Caco-2 (cell line): ENCODE measurements at regions of chr20 and their contacts with region 1.

Region 1: DNA sequence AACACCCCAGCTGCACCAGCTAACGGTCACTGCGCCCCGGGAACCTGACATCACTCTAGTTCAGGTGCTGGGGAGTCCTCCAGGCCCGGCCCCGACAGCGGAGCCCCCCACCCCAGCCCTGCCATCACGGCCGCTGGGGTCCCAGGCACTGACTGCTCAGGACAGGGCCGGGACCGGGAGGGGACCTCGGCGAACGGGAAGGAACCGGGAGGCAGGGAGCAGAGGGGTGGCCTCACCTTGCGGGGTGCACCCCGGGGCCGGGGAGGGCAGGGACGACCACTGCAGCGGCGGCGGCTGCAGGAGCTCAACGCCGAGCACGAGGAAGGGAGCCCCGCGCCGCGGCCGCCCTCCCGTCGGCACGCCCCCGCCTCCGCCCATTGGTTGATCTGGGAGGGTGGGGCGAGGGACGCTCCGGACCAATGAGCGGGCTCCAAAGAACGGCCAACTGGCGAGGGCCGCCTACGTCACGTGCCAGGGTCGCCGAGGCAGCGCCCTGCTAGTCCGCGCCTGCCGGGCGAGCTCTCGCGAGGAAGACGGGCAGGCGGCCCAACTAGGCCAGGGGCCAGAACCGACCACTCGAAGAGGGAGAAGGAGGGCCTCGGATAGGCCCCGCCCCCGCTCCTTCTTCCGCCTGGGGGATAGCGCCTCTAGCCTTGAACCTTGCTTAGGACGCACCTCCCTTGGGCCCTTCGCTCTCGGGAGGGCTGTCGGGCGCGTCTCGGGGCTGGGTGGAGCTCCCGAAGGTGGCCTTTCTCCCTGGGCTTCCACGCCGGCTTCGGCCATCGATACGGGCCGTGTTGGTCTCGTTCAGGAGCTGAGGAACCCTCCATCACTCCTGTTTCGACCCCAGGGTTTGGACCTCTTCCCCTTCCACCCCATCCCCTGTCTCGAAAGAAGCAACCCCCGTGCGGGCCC is at the start of gene ADISSP:
- DNase-seq: peak; percentile 99
- H3K4me3 ChIP-seq: peak within 1 kb of the TSS; percentile 91
- H3K4me3 Mint-ChIP-seq: peak within 1 kb of the TSS; percentile 90
- H3K27ac Mint-ChIP-seq: peak within 1 kb of the TSS; percentile 90
- H3K4me1 ChIP-seq: peaks cover 11% of the 10 kb centered on the region
- H3K4me1 Mint-ChIP-seq: peaks cover 7% of the 10 kb centered on the region
- H3K27me3 ChIP-seq: no peaks in the 10 kb centered on the region
- H3K27me3 Mint-ChIP-seq: no peaks in the 10 kb centered on the region
- CTCF ChIP-seq: peak in 1 of 2 experiments; percentile 29
- total RNA-seq, gene ADISSP: 54.7 and 56.1 TPM in 2 replicates

Region 2: DNA sequence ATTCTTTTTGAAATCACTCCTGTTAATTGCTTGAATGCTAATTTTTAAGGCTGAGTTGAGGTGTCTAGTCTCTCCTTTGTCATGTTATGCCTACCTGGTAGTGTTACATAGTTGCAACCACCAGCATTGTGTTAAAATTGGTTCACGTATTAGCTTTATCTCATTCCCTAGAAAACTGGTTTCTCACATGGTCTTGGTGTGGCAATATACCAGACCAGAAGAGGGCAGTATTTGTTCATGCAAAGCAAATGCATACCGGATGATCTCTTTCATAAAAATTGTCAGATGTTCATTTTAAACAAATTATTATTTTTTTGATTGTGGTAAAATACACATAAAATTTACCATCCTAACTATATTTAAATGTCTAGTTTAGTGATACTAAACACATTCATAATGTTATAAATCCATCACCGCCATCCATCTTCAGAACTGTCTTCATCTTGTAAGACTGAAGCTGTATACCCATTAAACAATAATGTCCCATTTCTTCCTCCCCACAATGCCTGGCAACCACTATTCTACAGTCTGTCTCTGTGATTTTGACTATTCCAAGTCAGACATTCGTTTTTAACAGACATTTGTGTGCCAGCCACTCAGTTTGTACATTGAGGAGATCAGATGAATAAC is 204.0 kb before region 1 on chr20:
- CTCF ChIA-PET with region 1: interaction called, 10 read pairs
- POLR2A ChIA-PET with region 1: no interaction called
- intact Hi-C with region 1: no loop called
- DNase-seq: peak in 1 of 2 experiments; percentile 65
- H3K4me3 ChIP-seq: no peak overlapping the region
- H3K4me3 Mint-ChIP-seq: no peak overlapping the region
- H3K27ac Mint-ChIP-seq: no peak overlapping the region
- H3K4me1 ChIP-seq: no peaks in the 10 kb centered on the region
- H3K4me1 Mint-ChIP-seq: no peaks in the 10 kb centered on the region
- H3K27me3 ChIP-seq: no peaks in the 10 kb centered on the region
- H3K27me3 Mint-ChIP-seq: no peaks in the 10 kb centered on the region
- CTCF ChIP-seq: peak; percentile 71 to 76

Region 3: DNA sequence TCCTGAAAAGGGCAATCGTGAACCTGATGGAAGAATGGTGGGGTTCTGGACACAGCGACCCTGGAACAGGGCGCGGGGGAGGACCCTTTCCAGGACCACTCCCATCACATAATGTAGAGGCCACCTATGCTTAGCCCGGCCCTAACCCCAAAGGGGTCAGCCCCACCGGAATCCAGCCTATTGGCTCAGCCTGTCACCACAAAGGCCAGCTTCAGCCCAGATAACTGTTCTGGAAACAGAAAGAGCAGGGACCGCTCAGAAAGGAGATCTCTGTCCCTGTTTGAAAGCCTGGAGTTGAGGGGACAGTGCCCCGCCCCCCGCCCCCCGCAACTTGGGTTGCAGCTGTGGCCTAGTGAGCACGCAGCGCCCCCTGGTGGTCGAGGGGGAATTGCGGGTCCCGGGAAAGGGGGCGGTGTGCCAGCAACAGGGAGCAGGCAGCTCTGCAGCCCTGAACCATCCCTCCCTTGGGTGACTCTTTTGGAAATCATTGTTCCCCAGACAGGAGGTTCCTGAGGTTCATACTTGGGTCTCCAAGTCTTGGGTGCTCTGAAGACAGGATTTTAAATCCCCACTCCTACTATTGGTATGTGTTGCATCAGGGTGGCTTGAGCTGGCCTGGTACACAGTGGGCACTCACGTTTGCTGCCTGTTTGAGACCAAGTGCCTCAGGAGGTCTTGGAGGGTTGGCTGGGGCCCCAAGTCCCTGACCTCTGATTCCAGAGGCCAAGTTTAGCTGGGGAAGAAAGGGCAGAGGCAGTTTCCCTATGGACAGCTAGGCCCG is 56.8 kb before region 1 on chr20:
- CTCF ChIA-PET with region 1: interaction called, 35 read pairs
- POLR2A ChIA-PET with region 1: no interaction called
- intact Hi-C with region 1: loop called (anchors 1 kb)
- DNase-seq: peak in 1 of 2 experiments; percentile 87
- H3K4me3 ChIP-seq: no peak overlapping the region
- H3K4me3 Mint-ChIP-seq: no peak overlapping the region
- H3K27ac Mint-ChIP-seq: no peak overlapping the region
- H3K4me1 ChIP-seq: no peaks in the 10 kb centered on the region
- H3K4me1 Mint-ChIP-seq: no peaks in the 10 kb centered on the region
- H3K27me3 ChIP-seq: no peaks in the 10 kb centered on the region
- H3K27me3 Mint-ChIP-seq: peaks cover 5% of the 10 kb centered on the region
- CTCF ChIP-seq: peak; percentile 94 to 97

Region 4: DNA sequence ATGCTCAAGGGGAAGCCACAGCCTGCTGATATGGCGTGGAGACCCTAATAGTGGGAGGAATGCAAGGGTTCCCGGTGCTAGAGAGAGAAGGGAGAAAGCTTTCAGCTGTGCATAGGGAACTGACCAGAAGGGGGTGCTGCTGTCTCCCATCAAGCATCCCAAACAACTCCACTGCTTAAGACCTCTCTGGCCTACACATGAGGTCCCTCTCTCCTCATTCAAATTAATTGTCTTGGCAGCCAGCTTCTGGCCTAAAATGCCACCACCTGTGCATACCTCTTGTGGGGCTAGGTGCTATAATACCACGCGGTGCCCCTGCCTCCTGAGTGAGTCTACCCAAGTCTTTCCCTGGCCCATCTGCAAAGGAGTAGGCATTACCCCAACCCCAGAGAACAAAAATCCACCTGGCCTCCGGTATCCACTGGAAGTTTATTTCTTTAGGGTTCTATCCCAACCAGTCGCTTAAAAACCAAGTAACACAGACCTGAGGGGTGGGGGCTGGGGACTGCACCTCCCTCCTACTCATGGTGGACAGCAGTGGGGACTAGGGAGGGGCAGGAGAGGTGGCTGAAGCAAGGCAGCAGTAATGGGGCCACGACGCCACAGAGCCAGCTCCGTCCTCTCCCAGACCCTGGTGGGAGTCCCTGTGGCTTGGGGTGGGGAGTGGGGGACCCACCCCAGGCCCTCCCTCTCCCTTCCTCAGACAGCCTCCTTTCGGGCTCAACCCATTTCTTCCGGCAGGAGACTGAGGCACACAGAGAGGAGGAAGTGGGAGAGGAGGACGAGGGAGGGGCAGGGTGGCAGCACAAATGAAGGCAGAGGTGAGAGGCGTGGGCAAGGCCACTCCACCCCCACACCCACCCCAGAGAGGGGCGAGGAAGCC is 14.3 kb before region 1 on chr20:
- CTCF ChIA-PET with region 1: interaction called, 12 read pairs
- POLR2A ChIA-PET with region 1: interaction called, 9 read pairs
- intact Hi-C with region 1: loop called (anchors 2 kb)
- DNase-seq: peak in 1 of 2 experiments; percentile 56
- H3K4me3 ChIP-seq: no peak overlapping the region
- H3K4me3 Mint-ChIP-seq: no peak overlapping the region
- H3K27ac Mint-ChIP-seq: no peak overlapping the region
- H3K4me1 ChIP-seq: no peaks in the 10 kb centered on the region
- H3K4me1 Mint-ChIP-seq: no peaks in the 10 kb centered on the region
- H3K27me3 ChIP-seq: no peaks in the 10 kb centered on the region
- H3K27me3 Mint-ChIP-seq: no peaks in the 10 kb centered on the region
- CTCF ChIP-seq: peak; percentile 59 to 60

Region 5: GRCh38 chr20:3795511-3796468 is 28.1 kb after region 1 on chr20 and contains the start of gene CDC25B:
- CTCF ChIA-PET with region 1: no interaction called
- POLR2A ChIA-PET with region 1: interaction called, 11 read pairs
- intact Hi-C with region 1: no loop called
- DNase-seq: peak; percentile 90 to 95
- H3K4me3 ChIP-seq: peak within 1 kb of the TSS; percentile 69
- H3K4me3 Mint-ChIP-seq: peak within 1 kb of the TSS; percentile 84
- H3K27ac Mint-ChIP-seq: peak within 1 kb of the TSS; percentile 93
- H3K4me1 ChIP-seq: peaks cover 36% of the 10 kb centered on the region
- H3K4me1 Mint-ChIP-seq: peaks cover 25% of the 10 kb centered on the region
- H3K27me3 ChIP-seq: no peaks in the 10 kb centered on the region
- H3K27me3 Mint-ChIP-seq: no peaks in the 10 kb centered on the region
- CTCF ChIP-seq: peak; percentile 49 to 68
- total RNA-seq, gene CDC25B: 59.0 and 66.7 TPM in 2 replicates

Region 6: GRCh38 chr20:3828798-3829197 is 61.1 kb after region 1 on chr20:
- CTCF ChIA-PET with region 1: no interaction called
- POLR2A ChIA-PET with region 1: no interaction called
- intact Hi-C with region 1: no loop called
- DNase-seq: no peak
- H3K4me3 ChIP-seq: no peak overlapping the region
- H3K4me3 Mint-ChIP-seq: no peak overlapping the region
- H3K27ac Mint-ChIP-seq: no peak overlapping the region
- H3K4me1 ChIP-seq: no peaks in the 10 kb centered on the region
- H3K4me1 Mint-ChIP-seq: no peaks in the 10 kb centered on the region
- H3K27me3 ChIP-seq: no peaks in the 10 kb centered on the region
- H3K27me3 Mint-ChIP-seq: no peaks in the 10 kb centered on the region
- CTCF ChIP-seq: no peak